IMR-90 (cell line): ENCODE measurements at regions of chr14 and their contacts with region 1.

Region 1: DNA sequence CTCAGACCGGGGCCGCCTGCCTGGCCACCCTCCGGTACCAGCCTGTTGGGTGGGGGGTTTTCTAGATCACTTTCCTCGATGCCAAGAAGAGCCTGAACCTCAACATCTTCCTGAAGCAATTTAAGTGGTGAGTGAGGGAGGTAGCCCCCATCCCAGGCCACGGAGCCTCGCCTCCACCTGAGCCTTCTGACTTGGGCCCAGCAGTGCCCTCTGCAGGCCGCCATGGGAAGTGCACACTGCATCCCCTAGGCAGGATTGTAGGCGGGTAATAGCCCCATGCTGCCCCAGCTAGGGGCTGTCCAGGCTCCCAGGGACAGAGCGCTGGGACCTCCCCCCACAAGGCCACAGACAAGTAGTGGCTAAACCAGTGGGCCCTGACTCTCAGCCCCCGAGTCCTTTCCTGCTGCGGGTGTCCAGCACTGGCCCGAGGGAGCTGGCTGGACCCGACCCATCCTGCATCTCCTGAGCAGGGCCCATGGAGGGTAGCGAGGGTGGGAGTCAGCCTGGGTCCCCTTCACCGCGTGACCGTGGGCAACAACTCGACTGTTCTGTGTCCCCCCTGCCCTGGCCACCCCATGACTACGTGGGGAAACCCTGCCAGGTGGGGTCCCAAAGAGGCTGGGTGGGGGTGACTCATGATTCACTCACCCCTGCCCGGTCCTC is 15.3 kb upstream of the ADSS1 start:
- DNase-seq: peak; percentile 39
- ATAC-seq: peak; percentile 91
- H3K4me3 ChIP-seq: no peak overlapping the region
- H3K27ac ChIP-seq: no peak overlapping the region
- H3K4me1 ChIP-seq: peaks cover 4% of the 10 kb centered on the region; the same call in 1 of the 2 replicates
- H3K27me3 ChIP-seq: no peaks in the 10 kb centered on the region
- CTCF ChIP-seq: peak; percentile 89
- POLR2A ChIP-seq: no peak
- RAD21 ChIP-seq: peak; percentile 78

Region 2: GRCh38 chr14:104137297-104138097 is 571.2 kb before region 1 on chr14:
- CTCF ChIA-PET with region 1: no interaction called
- POLR2A ChIA-PET with region 1: no interaction called
- dilution Hi-C with region 1: no loop called
- in situ Hi-C with region 1: no loop called
- intact Hi-C with region 1: loop called (anchors 2 kb)
- DNase-seq: peak; percentile 4
- ATAC-seq: peak; percentile 90
- H3K4me3 ChIP-seq: no peak overlapping the region
- H3K27ac ChIP-seq: no peak overlapping the region
- H3K4me1 ChIP-seq: no peaks in the 10 kb centered on the region; the same call in 1 of the 2 replicates
- H3K27me3 ChIP-seq: peaks cover 45% of the 10 kb centered on the region
- CTCF ChIP-seq: peak; percentile 55
- POLR2A ChIP-seq: no peak
- RAD21 ChIP-seq: peak; percentile 60

Region 3: DNA sequence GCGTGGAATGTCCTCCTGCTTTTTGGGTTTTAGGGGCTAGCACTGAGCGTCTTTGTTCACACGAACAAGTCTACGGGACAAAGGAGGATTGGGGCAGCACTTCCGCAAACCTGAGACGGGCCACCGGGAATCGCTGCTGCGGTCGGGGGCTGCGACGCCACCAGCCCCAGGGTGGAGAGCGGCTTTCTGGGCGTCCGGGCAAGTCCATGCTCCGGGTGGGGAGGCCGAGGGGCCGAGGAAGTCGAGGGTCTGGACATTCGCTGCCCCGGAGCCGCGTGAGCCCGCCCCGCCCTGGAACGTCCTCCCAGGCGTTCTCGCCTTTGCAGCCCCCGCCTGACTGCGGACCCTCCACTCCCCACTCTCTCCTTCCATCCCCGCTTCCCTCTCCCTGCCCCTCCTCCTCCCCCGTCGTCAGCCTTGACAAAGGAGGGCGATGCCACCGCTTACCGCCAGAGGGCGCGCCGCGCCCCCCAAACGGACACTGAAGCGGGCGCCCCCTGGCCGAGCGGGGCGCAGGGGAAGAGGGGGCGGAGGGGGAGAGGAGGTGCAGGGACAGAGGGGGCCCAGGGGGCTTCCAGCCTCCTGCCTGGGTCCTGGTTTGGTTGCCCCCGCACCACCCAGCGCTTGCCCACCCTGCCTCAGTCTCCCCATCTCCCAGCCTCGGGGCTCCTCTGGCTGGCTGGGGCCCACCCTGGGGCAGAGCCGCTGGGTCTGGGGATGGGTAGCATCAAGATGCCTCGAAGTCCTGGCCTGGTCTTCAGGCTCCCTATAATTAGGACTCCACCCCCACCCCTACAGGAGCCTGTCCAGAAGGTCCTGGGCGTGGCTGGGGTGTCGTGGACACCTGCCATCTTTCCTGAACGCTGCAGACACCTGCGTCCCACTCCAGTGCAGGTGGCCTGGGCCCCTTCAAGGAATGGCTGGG is 58.4 kb before region 1 on chr14:
- CTCF ChIA-PET with region 1: no interaction called
- POLR2A ChIA-PET with region 1: no interaction called
- dilution Hi-C with region 1: no loop called
- in situ Hi-C with region 1: loop called (anchors 5 kb)
- intact Hi-C with region 1: loop called (anchors 1 kb)
- DNase-seq: peak; percentile 31
- ATAC-seq: peak; percentile 99
- H3K4me3 ChIP-seq: peak overlapping the region; percentile 41
- H3K27ac ChIP-seq: peak overlapping the region; percentile 1; the same call in 1 of the 2 replicates
- H3K4me1 ChIP-seq: 0 out of 2 replicates have a peak, but pooled peaks cover 2% of the 10 kb centered on the region
- H3K27me3 ChIP-seq: peaks cover 9% of the 10 kb centered on the region
- CTCF ChIP-seq: peak; percentile 98
- POLR2A ChIP-seq: no peak
- RAD21 ChIP-seq: peak; percentile 87

Region 4: GRCh38 chr14:104657101-104657524 is 51.6 kb before region 1 on chr14:
- CTCF ChIA-PET with region 1: no interaction called
- POLR2A ChIA-PET with region 1: no interaction called
- dilution Hi-C with region 1: no loop called
- in situ Hi-C with region 1: loop called (anchors 5 kb)
- intact Hi-C with region 1: no loop called
- DNase-seq: no peak
- ATAC-seq: no peak
- H3K4me3 ChIP-seq: no peak overlapping the region
- H3K27ac ChIP-seq: no peak overlapping the region
- H3K4me1 ChIP-seq: no peaks in the 10 kb centered on the region
- H3K27me3 ChIP-seq: peaks cover 15% of the 10 kb centered on the region; the same call in 1 of the 2 replicates
- CTCF ChIP-seq: no peak
- POLR2A ChIP-seq: no peak
- RAD21 ChIP-seq: no peak

Region 5: DNA sequence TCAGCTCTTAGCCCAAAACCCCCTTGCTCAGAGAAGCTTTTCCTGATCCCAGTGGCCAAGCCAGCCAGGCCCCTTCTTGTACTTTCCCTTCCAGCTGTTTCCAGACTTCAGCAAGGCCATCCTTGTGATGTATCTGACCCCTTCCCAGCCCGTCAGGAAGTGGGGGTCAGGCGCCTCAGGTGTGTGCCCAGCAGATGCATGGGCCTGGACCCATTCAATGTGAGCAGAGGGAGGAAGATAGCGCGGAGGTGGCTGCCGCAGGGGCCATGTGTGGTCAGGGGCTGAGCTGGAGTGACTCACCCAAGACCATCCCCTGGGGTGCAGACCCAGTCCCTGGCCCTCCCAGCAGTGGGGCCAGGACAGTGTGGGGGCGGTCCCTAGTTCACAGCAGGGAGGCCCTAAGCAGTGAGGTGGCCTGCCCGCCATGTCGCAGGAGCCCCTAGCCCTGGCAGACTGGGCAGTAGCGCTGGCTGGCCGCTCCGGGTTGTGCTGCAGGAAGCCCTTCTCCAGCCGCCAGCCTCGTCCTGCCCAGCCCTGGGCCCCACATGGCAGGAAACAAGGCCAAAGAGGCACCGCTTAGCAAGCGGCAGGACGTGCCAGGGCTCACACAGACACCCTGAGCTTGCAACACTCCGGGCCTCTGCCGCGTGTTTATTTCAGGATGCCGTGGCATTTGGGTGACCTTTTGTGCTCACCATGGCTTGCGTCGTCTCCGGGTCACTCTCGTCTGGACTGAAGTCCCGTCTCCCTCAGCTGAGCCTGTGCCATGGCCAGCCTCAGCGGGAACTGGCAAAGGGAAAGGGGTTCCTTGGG is 27.3 kb after region 1 on chr14:
- CTCF ChIA-PET with region 1: no interaction called
- POLR2A ChIA-PET with region 1: no interaction called
- dilution Hi-C with region 1: no loop called
- in situ Hi-C with region 1: no loop called
- intact Hi-C with region 1: no loop called
- DNase-seq: peak; percentile 68
- ATAC-seq: peak; percentile 83
- H3K4me3 ChIP-seq: no peak overlapping the region
- H3K27ac ChIP-seq: peak overlapping the region; percentile 58
- H3K4me1 ChIP-seq: peaks cover 15% of the 10 kb centered on the region
- H3K27me3 ChIP-seq: no peaks in the 10 kb centered on the region
- CTCF ChIP-seq: no peak
- POLR2A ChIP-seq: no peak
- RAD21 ChIP-seq: no peak